ENCODE measurements at regions of chr9 and their contacts with region 1.

Region 1: GRCh38 chr9:84759300-84759750 is 89.8 kb downstream of the NTRK2 start:
- DNase-seq: peak; percentile 62
- H3K4me3 Mint-ChIP-seq: no peak overlapping the region
- H3K27ac Mint-ChIP-seq: peak overlapping the region; percentile 77
- H3K4me1 Mint-ChIP-seq: peaks cover 12% of the 10 kb centered on the region
- H3K27me3 Mint-ChIP-seq: no peaks in the 10 kb centered on the region
- CTCF ChIP-seq: no peak

Region 2: DNA sequence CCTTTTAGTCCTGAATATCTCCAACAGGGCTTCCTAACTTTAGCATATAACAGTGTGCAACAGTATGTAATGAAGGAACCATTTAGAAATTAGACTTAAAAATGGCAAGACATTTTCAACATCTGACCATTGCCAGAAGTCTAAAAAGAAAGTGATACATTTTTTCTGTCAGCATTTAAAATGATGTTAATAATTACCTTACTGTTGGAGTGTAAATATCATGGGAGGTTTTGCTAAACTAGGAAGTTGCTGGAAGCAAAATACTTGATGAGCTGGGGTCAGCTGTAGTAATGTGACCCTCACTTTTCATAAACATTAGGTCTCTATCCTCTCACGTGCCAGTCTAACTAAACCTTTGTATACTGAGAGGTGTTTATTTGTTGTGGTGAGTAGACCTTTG is 21.0 kb before region 1 on chr9:
- CTCF ChIA-PET with region 1: no interaction called
- POLR2A ChIA-PET with region 1: interaction called, 4 read pairs
- intact Hi-C with region 1: loop called (anchors 2 kb)
- DNase-seq: no peak
- H3K4me3 Mint-ChIP-seq: no peak overlapping the region
- H3K27ac Mint-ChIP-seq: no peak overlapping the region
- H3K4me1 Mint-ChIP-seq: no peaks in the 10 kb centered on the region
- H3K27me3 Mint-ChIP-seq: peaks cover 7% of the 10 kb centered on the region
- CTCF ChIP-seq: no peak

Region 3: GRCh38 chr9:85108229-85108628 is 348.9 kb after region 1 on chr9:
- CTCF ChIA-PET with region 1: no interaction called
- POLR2A ChIA-PET with region 1: no interaction called
- intact Hi-C with region 1: no loop called
- DNase-seq: peak; percentile 18
- H3K4me3 Mint-ChIP-seq: no peak overlapping the region
- H3K27ac Mint-ChIP-seq: no peak overlapping the region
- H3K4me1 Mint-ChIP-seq: no peaks in the 10 kb centered on the region
- H3K27me3 Mint-ChIP-seq: peaks cover 19% of the 10 kb centered on the region
- CTCF ChIP-seq: no peak

Region 4: GRCh38 chr9:86202338-86202882 is 1443.1 kb after region 1 on chr9:
- CTCF ChIA-PET with region 1: no interaction called
- POLR2A ChIA-PET with region 1: no interaction called
- intact Hi-C with region 1: no loop called
- DNase-seq: peak; percentile 64
- H3K4me3 Mint-ChIP-seq: no peak overlapping the region
- H3K27ac Mint-ChIP-seq: no peak overlapping the region
- H3K4me1 Mint-ChIP-seq: peaks cover 6% of the 10 kb centered on the region
- H3K27me3 Mint-ChIP-seq: no peaks in the 10 kb centered on the region
- CTCF ChIP-seq: peak; percentile 65